Panc1 (cell line): ENCODE measurements at regions of chr14 and their contacts with region 1.

Region 1: DNA sequence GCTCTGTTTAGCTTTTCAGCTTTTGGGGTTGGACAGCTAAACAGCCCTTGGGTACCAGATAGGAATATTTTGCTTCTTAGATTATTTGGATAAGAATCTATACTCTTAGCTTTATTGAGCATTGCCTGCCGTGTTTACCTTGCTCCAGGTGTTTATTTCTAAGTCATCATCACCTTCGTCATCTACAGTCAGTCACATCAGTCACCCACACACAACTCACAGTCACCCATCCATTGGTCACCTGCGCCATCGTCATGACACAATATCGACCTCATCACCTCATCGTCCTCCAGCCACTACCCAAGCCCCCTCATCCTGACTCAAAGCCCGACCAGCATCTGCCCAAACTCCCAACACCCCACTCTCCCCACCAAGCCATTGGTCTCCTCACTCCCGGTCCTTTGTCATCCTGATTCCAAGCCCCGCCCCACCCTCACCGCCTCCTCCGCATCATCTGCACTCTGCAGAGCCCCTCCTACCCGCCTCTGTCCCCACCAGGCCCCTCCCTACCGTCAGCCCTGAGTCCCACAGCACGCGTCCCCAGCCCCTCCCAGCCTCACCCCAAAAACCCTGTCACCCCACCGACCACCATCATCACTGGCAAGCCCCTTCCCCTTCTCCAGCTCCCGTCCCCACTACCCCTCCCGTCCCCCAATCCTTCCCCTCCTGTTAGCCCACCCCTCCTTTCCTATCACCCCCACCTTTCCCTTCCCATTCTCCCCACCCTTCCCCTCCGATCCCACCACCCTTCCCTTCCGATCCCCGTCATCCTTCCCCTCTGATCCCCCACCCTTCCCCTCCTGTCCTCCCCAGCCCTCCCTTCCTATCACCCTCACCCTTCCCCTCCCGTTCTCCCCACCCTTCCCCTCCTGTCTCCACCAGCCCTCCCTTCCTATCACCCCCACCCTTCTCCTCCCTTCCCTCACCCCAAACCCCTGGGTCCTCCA is 9.8 kb downstream of the DLK1 start:
- DNase-seq: no peak
- ATAC-seq: no peak
- H3K4me3 ChIP-seq: no peak overlapping the region
- H3K27ac ChIP-seq: no peak overlapping the region
- H3K4me1 ChIP-seq: no peaks in the 10 kb centered on the region
- H3K27me3 ChIP-seq: no peaks in the 10 kb centered on the region
- CTCF ChIP-seq: no peak

Region 2: DNA sequence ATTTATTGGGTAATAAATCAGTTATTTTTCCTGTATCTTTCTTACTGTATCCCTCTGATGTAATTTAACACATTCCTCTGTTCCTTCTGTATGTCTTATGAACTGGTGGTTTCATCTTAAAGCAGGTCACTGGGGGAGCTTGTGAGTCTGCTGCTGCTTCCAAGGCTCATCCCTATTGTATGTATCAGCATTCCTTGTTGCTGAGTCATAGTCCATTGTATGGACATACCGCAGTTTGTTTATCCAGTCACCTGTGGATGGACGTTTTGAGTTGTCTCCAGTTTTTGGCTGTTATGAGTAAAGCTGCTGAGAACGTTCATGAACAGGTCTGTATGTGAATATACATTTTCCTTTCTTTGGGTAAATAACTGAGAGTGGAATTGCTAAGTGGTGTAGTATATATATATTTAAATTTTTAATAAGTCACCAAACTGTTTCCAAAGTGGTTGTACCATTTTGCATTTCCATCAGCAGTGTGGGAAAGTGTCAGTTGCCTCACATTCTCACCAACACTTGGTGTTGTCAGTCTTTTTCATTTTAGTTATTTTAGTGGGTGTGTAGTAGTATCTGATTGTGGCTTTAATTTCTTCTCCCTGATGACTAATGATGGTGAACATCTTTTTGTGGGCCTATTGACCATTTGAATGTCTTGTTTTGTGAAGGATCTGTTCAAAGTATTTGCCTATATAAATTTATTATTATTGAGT is 232.0 kb before region 1 on chr14:
- CTCF ChIA-PET with region 1: no interaction called
- POLR2A ChIA-PET with region 1: no interaction called
- in situ Hi-C with region 1: no loop called
- intact Hi-C with region 1: no loop called
- DNase-seq: peak; percentile 10
- ATAC-seq: no peak
- H3K4me3 ChIP-seq: no peak overlapping the region
- H3K27ac ChIP-seq: no peak overlapping the region
- H3K4me1 ChIP-seq: no peaks in the 10 kb centered on the region
- H3K27me3 ChIP-seq: no peaks in the 10 kb centered on the region
- CTCF ChIP-seq: no peak

Region 3: GRCh38 chr14:100571837-100572236 is 164.7 kb before region 1 on chr14:
- CTCF ChIA-PET with region 1: no interaction called
- POLR2A ChIA-PET with region 1: interaction called, 11 read pairs
- in situ Hi-C with region 1: no loop called
- intact Hi-C with region 1: no loop called
- DNase-seq: no peak
- ATAC-seq: no peak
- H3K4me3 ChIP-seq: no peak overlapping the region
- H3K27ac ChIP-seq: no peak overlapping the region
- H3K4me1 ChIP-seq: peaks cover 11% of the 10 kb centered on the region
- H3K27me3 ChIP-seq: no peaks in the 10 kb centered on the region
- CTCF ChIP-seq: no peak